ENCODE measurements at regions of chr4 and their contacts with region 1.

Region 1: DNA sequence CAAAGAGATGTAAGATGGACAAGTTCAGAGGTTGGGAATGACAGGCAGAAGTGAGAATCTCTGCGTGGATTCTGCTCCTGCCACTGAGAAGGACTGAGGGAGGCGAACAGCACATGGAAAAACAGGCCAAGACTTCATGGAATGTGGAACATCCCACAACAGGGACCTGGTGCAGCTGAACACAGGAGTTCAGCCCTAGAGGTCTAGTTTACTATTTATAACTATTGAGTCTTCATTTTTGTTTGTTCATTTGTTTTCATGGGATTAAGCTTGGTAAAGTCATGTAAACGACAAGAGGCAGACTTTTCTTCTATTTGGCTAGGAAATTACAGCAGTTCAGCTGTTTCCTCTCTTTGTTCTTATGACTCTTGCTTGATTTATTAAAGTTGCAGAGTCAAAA is 234.5 kb downstream of the MAML3 start:
- DNase-seq: peak; percentile 95
- H3K4me3 ChIP-seq: no peak overlapping the region
- H3K27ac ChIP-seq: peak overlapping the region; percentile 84
- H3K4me1 ChIP-seq: peaks cover 47% of the 10 kb centered on the region
- H3K27me3 ChIP-seq: no peaks in the 10 kb centered on the region
- CTCF ChIP-seq: no peak
- POLR2A ChIP-seq: peak; percentile 21

Region 2: DNA sequence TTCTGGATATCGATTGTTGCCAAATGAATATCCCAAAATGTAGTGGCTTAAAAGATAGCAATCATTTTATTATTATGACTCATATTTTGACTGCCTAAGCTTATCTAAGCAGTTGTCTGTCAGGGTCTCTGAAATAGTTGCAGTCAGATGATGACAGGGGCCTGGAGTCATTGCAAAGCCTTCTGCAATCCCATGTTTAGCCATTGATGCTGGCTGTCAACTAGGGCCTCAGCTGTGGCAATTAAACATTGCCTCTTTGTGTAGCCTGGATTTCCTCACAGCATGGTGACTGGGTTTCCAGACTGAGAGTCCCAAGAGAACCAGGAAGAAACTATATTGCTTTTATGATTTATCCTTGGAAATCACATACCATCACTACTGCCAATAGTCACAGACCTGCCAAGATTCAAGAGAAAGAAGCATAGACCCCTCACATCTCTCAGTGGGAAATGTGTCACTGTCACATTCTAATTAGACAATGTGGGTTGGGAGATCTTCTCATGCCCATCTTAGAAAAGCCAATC is 1131.2 kb before region 1 on chr4:
- CTCF ChIA-PET with region 1: no interaction called
- POLR2A ChIA-PET with region 1: no interaction called
- dilution Hi-C with region 1: no loop called
- intact Hi-C with region 1: no loop called
- DNase-seq: no peak
- H3K4me3 ChIP-seq: no peak overlapping the region
- H3K27ac ChIP-seq: no peak overlapping the region
- H3K4me1 ChIP-seq: no peaks in the 10 kb centered on the region
- H3K27me3 ChIP-seq: no peaks in the 10 kb centered on the region
- CTCF ChIP-seq: no peak
- POLR2A ChIP-seq: no peak

Region 3: GRCh38 chr4:139872274-139872673 is 47.2 kb before region 1 on chr4:
- CTCF ChIA-PET with region 1: no interaction called
- POLR2A ChIA-PET with region 1: interaction called, 3 read pairs
- dilution Hi-C with region 1: no loop called
- intact Hi-C with region 1: loop called (anchors 5 kb)
- DNase-seq: peak; percentile 93
- H3K4me3 ChIP-seq: no peak overlapping the region
- H3K27ac ChIP-seq: peak overlapping the region; percentile 56
- H3K4me1 ChIP-seq: peaks cover 16% of the 10 kb centered on the region
- H3K27me3 ChIP-seq: no peaks in the 10 kb centered on the region
- CTCF ChIP-seq: no peak
- POLR2A ChIP-seq: no peak

Region 4: GRCh38 chr4:140004549-140004895 is 85.0 kb after region 1 on chr4:
- CTCF ChIA-PET with region 1: interaction called, 4 read pairs
- POLR2A ChIA-PET with region 1: no interaction called
- dilution Hi-C with region 1: no loop called
- intact Hi-C with region 1: loop called (anchors 5 kb)
- DNase-seq: peak; percentile 74
- H3K4me3 ChIP-seq: peak overlapping the region in 2 of 3 experiments; percentile 7 to 34
- H3K27ac ChIP-seq: no peak overlapping the region
- H3K4me1 ChIP-seq: peaks cover 7% of the 10 kb centered on the region
- H3K27me3 ChIP-seq: no peaks in the 10 kb centered on the region
- CTCF ChIP-seq: no peak
- POLR2A ChIP-seq: no peak

Measured in endothelial cell of umbilical vein (primary cell).